Panc1 (cell line): ENCODE measurements at regions of chr3 and their contacts with region 1.

Region 1: DNA sequence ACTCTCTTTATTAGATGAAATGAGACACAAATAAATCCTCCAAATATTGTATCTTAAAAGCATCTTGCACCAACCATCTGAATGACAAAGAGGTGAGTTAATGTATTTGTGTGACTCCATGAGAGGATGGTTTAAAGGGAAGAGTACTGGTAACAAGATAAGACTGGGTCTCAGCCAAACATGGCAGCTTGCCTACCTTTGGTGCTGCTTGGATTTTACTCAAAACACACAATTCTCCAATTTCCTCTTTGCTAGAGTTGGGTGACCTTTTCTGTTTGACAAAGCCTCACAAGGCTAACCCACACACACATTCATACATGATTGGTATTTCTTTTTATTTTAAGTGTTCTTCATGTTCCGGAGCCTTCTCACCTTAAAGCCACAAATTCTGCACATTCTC is 506.4 kb downstream of the FGF12 start:
- DNase-seq: no peak
- ATAC-seq: no peak
- H3K4me3 ChIP-seq: no peak overlapping the region
- H3K27ac ChIP-seq: no peak overlapping the region
- H3K4me1 ChIP-seq: no peaks in the 10 kb centered on the region
- H3K27me3 ChIP-seq: no peaks in the 10 kb centered on the region
- CTCF ChIP-seq: no peak

Region 2: DNA sequence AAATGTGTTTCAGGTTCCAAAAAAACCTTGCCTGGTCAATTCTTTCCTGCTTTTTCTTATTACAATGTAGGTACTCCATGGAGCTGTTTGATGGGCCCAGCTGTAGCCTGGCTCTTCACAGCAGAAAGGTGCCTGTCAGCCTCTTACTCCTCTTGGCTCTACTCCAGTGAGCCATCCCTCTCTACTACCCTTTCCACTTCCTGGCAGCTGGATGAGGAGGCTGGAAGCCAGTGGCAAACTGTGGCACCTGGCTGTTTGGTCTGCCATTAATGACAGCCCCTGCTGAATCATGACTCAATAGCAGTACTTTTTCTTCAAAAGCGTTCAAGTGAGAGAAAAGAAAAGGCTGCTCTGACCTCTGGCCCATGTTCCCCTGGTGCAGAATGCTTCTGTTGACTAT is 141.8 kb before region 1 on chr3:
- CTCF ChIA-PET with region 1: no interaction called
- POLR2A ChIA-PET with region 1: no interaction called
- in situ Hi-C with region 1: no loop called
- intact Hi-C with region 1: no loop called
- DNase-seq: no peak
- ATAC-seq: no peak
- H3K4me3 ChIP-seq: no peak overlapping the region
- H3K27ac ChIP-seq: no peak overlapping the region
- H3K4me1 ChIP-seq: no peaks in the 10 kb centered on the region
- H3K27me3 ChIP-seq: no peaks in the 10 kb centered on the region
- CTCF ChIP-seq: no peak

Region 3: GRCh38 chr3:192260116-192261010 is 39.4 kb after region 1 on chr3:
- CTCF ChIA-PET with region 1: no interaction called
- POLR2A ChIA-PET with region 1: no interaction called
- in situ Hi-C with region 1: no loop called
- intact Hi-C with region 1: loop called (anchors 1 kb)
- DNase-seq: no peak
- ATAC-seq: no peak
- H3K4me3 ChIP-seq: no peak overlapping the region
- H3K27ac ChIP-seq: no peak overlapping the region
- H3K4me1 ChIP-seq: no peaks in the 10 kb centered on the region
- H3K27me3 ChIP-seq: no peaks in the 10 kb centered on the region
- CTCF ChIP-seq: no peak